ENCODE measurements at regions of chr21 and their contacts with region 1.

Region 1: DNA sequence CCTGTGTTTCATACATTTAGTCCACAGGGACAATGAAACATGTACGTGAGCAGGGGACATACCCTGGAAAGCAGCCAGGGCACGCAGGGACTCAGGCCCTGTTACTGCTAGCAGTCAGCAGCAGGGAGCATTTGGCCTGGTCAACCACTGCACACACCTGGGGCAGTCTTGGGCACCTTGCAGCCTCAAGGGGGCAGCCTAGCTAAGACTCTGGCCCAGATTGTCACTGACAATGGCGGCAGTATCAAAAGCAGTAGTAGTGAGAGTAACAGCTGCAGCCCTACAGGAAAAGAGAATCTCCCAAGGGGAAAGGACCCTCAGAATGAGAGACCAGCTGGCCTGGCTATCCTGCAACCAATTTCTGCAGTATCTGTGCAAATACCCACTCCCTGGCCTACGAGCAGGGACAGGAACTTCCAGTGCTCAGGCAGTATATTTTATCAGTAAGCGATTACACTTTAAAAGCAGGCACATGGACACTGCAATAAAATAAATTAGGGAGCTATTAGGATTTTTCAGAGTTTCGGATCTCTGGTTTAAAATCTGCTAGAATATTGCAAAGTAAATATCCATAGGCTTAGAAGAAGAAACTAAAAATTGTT is 475.6 kb downstream of the LTN1 start:
- DNase-seq: peak; percentile 40 to 69
- ATAC-seq: peak; percentile 87 to 97 (median 91)
- H3K4me3 ChIP-seq: no peak overlapping the region
- H3K27ac ChIP-seq: no peak overlapping the region
- H3K4me1 ChIP-seq: no peaks in the 10 kb centered on the region
- H3K27me3 ChIP-seq: no peaks in the 10 kb centered on the region
- CTCF ChIP-seq: peak; percentile 69

Region 2: GRCh38 chr21:28745131-28746016 is 228.3 kb after region 1 on chr21:
- intact Hi-C with region 1: loop called (anchors 1 to 2 kb)
- DNase-seq: peak; percentile 62 to 71
- ATAC-seq: peak; percentile 90 to 97 (median 94)
- H3K4me3 ChIP-seq: peak overlapping the region; percentile 70
- H3K27ac ChIP-seq: peak overlapping the region; percentile 74
- H3K4me1 ChIP-seq: peaks cover 6% of the 10 kb centered on the region
- H3K27me3 ChIP-seq: no peaks in the 10 kb centered on the region
- CTCF ChIP-seq: peak; percentile 97

Region 3: DNA sequence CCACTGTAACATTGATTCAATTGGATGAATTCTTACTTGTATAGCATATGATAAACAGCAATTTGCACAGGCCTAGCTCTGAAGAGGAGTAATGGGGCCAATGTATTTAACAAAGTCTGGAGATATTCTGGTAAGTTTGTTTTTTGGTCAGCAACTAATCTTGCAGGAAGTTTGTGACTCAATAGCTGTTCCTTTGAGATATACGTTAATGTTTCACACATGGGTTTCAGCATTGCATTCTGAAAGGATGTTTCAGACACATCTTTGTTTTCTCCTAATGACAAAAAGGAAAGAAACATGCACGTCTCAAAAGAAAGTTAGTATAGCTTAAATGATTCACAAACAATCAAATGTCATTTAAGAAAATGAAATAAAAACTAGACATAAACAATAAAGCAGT is 426.5 kb after region 1 on chr21:
- intact Hi-C with region 1: loop called in 1 of 2 experiments (anchors 10 kb)
- DNase-seq: no peak
- ATAC-seq: no peak
- H3K4me3 ChIP-seq: no peak overlapping the region
- H3K27ac ChIP-seq: no peak overlapping the region
- H3K4me1 ChIP-seq: no peaks in the 10 kb centered on the region
- H3K27me3 ChIP-seq: no peaks in the 10 kb centered on the region
- CTCF ChIP-seq: no peak

Measured in psoas muscle (tissue), 8 donors.